Ascending aorta (tissue), 2 donors: ENCODE measurements at regions of chr11 and their contacts with region 1.

Region 1: GRCh38 chr11:86955361-86956120 is at the start of gene FZD4:
- DNase-seq: peak; percentile 44 to 93
- H3K4me3 ChIP-seq: peak within 1 kb of the TSS; percentile 99 to 100
- H3K27ac ChIP-seq: peak within 1 kb of the TSS; percentile 94 to 95
- H3K4me1 ChIP-seq: peaks cover 0 to 23% of the 10 kb centered on the region in 2 donors
- H3K27me3 ChIP-seq: no peaks in the 10 kb centered on the region
- CTCF ChIP-seq: peak in 2 of 3 experiments; percentile 26 to 54
- total RNA-seq, gene FZD4: 124 TPM

Region 2: DNA sequence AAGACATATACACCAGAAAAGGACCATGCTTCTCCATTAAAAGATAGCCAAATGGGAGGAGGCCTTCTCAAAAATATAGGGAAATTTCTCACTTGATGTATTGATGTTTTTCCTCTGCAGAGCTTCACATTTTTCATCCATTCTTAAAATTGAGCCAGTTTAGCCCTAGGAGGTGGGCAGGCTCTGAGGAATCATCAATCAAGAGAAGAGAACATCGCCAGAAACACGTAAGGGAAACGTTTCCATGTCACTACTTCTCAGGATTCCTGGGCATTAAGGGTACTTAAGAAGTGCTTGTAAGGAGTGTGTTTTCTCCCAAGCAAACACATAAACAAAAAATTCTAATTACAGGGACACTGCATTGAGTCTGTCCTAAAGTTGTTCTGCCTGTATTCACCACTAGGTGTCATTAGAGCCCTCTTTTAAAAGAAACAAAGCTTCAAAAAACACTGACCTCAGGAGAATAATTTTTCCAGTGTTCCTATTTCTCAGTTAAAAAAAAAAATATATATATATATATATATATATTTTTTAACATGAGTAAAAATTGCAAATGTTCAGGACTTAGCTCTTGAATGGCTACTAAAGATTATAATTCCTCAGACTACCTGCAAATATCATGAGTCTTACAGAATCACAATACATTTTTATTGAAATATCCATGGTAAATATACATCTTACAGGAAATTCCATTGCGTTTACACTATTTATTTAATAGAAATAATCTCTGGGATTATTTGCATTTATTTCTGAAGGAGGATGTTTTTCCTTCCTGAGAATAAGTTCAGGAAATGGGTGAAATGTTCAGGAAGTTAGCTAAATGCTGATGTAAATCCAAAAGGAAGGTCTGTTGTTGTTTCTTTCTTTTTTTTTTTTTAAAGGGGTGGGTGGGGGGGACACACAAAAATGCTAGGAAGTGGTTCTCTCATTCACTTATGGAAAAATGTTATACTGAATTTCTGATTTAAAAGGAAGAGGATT is 16.4 kb before region 1 on chr11:
- intact Hi-C with region 1: loop called (anchors 1 kb)
- DNase-seq: no peak
- H3K4me3 ChIP-seq: no peak overlapping the region
- H3K27ac ChIP-seq: peak overlapping the region; percentile 74
- H3K4me1 ChIP-seq: peaks cover 19 to 58% of the 10 kb centered on the region in 2 donors
- H3K27me3 ChIP-seq: no peaks in the 10 kb centered on the region
- CTCF ChIP-seq: peak; percentile 58 to 72 (median 67)

Region 3: DNA sequence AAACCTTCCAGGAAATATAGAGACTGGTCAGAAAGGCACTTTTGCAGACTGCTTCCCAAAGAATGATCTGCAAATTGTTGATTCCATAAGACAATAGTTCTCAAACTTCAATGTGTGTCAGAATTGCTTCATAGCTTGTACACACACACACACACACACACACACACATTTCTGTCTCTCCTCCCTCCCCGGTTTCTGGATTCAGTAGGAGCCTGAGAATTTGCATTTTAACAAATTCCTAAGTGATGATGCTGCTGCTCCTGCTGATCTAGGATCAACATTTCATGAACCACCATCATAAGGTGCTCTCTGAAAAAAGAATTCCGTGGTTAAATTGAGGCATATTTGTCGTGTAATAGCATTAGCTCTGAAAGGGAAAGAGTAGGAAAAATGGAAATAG is 35.0 kb after region 1 on chr11:
- intact Hi-C with region 1: loop called (anchors 5 kb)
- DNase-seq: no peak
- H3K4me3 ChIP-seq: no peak overlapping the region
- H3K27ac ChIP-seq: no peak overlapping the region
- H3K4me1 ChIP-seq: peaks cover 3 to 12% of the 10 kb centered on the region in 2 donors
- H3K27me3 ChIP-seq: no peaks in the 10 kb centered on the region
- CTCF ChIP-seq: no peak

Region 4: GRCh38 chr11:87037450-87038234 is 82.1 kb after region 1 on chr11 and contains the start of gene TMEM135:
- intact Hi-C with region 1: loop called (anchors 1 kb)
- DNase-seq: peak; percentile 75 to 96
- H3K4me3 ChIP-seq: peak within 1 kb of the TSS; percentile 81 to 90
- H3K27ac ChIP-seq: peak within 1 kb of the TSS; percentile 87 to 90
- H3K4me1 ChIP-seq: peaks cover 0 to 21% of the 10 kb centered on the region in 2 donors
- H3K27me3 ChIP-seq: no peaks in the 10 kb centered on the region
- CTCF ChIP-seq: peak in 1 of 3 experiments; percentile 25
- total RNA-seq, gene TMEM135: 18.4 TPM

Region 5: DNA sequence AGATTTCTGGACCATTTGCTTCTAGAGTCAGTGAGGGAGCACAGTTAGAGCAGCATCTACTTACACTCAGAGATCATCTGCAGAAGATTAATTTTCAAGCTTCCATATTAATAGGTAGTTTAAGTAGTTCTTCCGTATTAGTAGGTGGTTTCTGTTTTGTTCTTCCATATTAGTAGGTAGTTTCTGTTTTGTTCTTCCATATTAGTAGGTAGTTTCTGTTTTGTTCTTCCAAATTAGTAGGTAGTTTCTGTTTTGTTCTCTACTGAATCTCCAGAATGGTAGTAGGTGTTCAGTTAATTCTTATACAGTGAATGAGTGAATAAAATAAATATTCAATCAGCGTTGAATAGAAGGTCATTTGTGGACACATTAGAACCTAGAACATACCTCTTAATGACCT is 257.9 kb after region 1 on chr11:
- intact Hi-C with region 1: no loop called
- DNase-seq: no peak
- H3K4me3 ChIP-seq: no peak overlapping the region
- H3K27ac ChIP-seq: no peak overlapping the region
- H3K4me1 ChIP-seq: no peaks in the 10 kb centered on the region
- H3K27me3 ChIP-seq: no peaks in the 10 kb centered on the region
- CTCF ChIP-seq: no peak

Region 6: DNA sequence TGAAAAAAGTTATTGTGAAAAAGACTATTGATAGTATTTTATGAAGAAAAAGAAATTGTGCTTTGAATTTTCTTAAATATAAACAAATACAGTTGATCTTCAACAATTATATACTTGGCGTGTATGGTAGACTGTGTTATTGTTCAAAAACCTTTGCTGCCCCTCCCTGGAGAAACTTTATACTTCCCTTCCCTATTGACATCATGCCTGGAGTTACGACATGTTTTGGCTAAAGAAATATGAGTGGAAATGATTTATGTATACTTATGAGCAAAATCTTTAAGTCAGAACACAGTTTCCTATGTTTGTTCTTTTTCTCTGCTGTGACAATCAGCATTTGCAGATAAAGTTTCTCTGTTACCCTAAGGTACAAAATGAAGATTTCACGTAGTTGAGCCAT is 326.0 kb after region 1 on chr11:
- intact Hi-C with region 1: loop called (anchors 5 kb)
- DNase-seq: no peak
- H3K4me3 ChIP-seq: no peak overlapping the region
- H3K27ac ChIP-seq: no peak overlapping the region
- H3K4me1 ChIP-seq: peaks cover 0 to 3% of the 10 kb centered on the region in 2 donors
- H3K27me3 ChIP-seq: no peaks in the 10 kb centered on the region
- CTCF ChIP-seq: peak in 2 of 3 experiments; percentile 29 to 46